HAP-1 (cell line): ENCODE measurements at regions of chr1 and their contacts with region 1.

Region 1: GRCh38 chr1:53334781-53335180 is 6.9 kb upstream of the LRP8 start:
- DNase-seq: no peak
- H3K4me3 ChIP-seq: no peak overlapping the region
- H3K4me1 ChIP-seq: no peaks in the 10 kb centered on the region
- H3K27me3 ChIP-seq: peaks cover 6% of the 10 kb centered on the region; the same call in 1 of the 2 replicates

Region 2: GRCh38 chr1:53376041-53376461 is 41.3 kb after region 1 on chr1:
- in situ Hi-C with region 1: loop called (anchors 5 kb)
- DNase-seq: no peak
- H3K4me3 ChIP-seq: no peak overlapping the region
- H3K4me1 ChIP-seq: peaks cover 3% of the 10 kb centered on the region; the same call in 1 of the 2 replicates
- H3K27me3 ChIP-seq: peaks cover 7% of the 10 kb centered on the region

Region 3: GRCh38 chr1:55164906-55165305 is 1830.1 kb after region 1 on chr1:
- in situ Hi-C with region 1: no loop called
- DNase-seq: no peak
- H3K4me3 ChIP-seq: no peak overlapping the region
- H3K4me1 ChIP-seq: no peaks in the 10 kb centered on the region
- H3K27me3 ChIP-seq: no peaks in the 10 kb centered on the region